Stomach (tissue), 19 donors: ENCODE measurements at regions of chr6 and their contacts with region 1.

Region 1: GRCh38 chr6:4055420-4056041 is 23.4 kb downstream of the FAM217A start:
- DNase-seq: peak; percentile 45 to 68
- H3K4me3 ChIP-seq: no peak overlapping the region
- H3K27ac ChIP-seq: peak overlapping the region in 2 of 5 donors; percentile 20 to 38
- H3K4me1 ChIP-seq: peaks cover 0 to 20% (median 6%) of the 10 kb centered on the region in 4 donors
- H3K27me3 ChIP-seq: no peaks in the 10 kb centered on the region
- CTCF ChIP-seq: peak in 3 of 7 experiments; percentile 30 to 65 (median 46)
- EP300 ChIP-seq: no peak
- POLR2A ChIP-seq: no peak

Region 2: DNA sequence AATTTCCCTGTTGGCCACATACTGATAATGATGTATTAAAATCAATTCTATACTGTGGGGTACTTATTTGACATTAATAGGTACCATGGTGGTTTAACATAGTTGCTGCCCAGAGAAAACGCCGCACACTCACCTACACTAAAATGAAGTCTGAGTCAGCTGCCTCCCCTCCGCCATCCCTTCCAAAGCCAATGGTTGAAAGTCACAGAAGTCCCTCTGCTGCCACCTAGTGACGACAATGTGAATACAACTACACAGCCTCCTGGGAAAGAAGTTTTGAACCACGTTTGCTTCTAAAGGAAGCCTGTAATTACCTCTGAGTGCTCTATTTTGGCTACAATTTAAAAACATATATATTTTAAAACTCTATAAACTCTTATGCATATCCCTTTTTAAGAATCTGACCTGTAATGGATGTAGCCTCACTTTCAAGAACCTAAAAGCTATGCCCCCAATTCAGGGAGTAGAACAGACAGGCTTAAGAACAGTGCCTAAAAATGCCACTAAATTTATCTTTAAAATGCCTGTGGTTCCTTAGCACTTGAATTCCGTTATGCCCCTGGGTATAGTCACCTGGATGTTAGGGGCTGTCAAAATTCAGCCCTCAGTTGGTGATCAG is 100.4 kb after region 1 on chr6:
- intact Hi-C with region 1: loop called (anchors 5 kb)
- DNase-seq: peak; percentile 80 to 95
- H3K4me3 ChIP-seq: no peak overlapping the region
- H3K27ac ChIP-seq: no peak overlapping the region
- H3K4me1 ChIP-seq: peaks cover 0 to 8% (median 2%) of the 10 kb centered on the region in 4 donors
- H3K27me3 ChIP-seq: no peaks in the 10 kb centered on the region
- CTCF ChIP-seq: peak in 5 of 7 experiments; percentile 71 to 86 (median 82)
- EP300 ChIP-seq: no peak
- POLR2A ChIP-seq: no peak